KBM-7 (cell line): ENCODE measurements at regions of chr3 and their contacts with region 1.

Region 1: GRCh38 chr3:63818281-63819150 is 583 bp upstream of the C3orf49 start:
- DNase-seq: peak; percentile 70

Region 2: GRCh38 chr3:63349583-63350521 is 468.7 kb before region 1 on chr3:
- in situ Hi-C with region 1: loop called (anchors 25 kb)
- DNase-seq: peak; percentile 45